ENCODE measurements at regions of chr2 and their contacts with region 1.

Region 1: DNA sequence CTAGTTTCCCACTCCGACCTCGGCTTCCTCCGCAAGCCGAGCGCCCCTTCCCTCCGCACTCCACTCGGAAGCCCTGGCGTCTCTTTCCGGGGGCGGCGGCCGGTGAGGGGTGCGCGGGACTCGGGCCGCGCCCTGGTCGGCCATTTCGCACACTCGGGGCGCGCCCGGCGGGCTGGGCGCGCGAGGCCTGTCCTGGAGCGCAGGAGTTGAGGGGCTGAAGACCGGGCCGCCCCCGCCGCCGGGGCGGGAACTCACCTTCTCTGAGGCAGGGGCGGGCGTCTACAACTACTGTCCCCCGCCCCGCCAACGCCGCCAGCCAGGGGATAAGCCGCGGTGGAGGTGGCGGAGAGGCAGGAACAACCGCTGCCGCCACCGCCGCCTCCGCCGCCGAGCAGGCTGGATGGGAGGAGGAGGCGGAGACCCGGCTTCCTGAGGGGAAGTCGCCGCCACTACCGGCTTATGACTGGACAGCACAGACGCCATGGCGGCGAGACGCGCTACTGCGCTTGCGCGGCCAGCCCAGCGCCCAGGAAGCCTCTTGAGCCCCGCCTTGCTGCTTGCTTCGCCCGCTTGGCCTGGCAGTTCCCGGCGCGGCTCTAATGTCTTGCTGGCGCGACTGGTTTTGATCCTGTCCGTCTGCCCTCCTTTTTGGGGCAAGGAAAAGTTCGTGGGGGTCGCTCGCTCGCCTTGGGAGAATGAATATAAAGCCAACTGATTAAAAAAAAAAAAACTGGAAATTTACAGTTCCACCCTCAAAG is at the start of gene KRCC1:
- DNase-seq: peak; percentile 94 to 99
- H3K4me3 ChIP-seq: peak within 1 kb of the TSS; percentile 96
- CTCF ChIP-seq: no peak
- POLR2A ChIP-seq: peak in 1 of 2 donors; percentile 36
- total RNA-seq, gene KRCC1: 11.5 to 27.9 (median 16.3) TPM

Region 2: DNA sequence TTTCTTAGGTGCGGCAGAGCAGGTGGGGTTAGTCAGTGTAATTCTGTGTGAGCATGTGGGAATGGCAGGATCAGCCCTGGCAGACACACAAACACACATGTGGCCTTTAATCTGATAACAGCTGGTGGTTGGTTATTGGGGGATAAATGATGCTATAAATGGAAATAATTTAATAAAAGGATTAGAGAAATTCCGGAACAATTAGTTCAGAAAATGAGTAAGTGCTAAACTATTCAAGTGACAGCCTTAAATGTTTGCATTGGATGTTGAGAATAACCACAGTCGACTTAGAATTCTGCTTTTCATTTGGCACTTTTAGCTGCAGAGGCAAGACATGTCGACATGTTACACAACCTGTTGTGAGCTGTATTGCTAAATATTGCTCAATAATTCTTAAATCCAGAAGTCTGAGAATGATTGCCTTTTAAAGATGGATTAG is 19.3 kb after region 1 on chr2:
- intact Hi-C with region 1: no loop called
- DNase-seq: no peak
- H3K4me3 ChIP-seq: no peak overlapping the region
- CTCF ChIP-seq: no peak
- POLR2A ChIP-seq: no peak

Region 3: DNA sequence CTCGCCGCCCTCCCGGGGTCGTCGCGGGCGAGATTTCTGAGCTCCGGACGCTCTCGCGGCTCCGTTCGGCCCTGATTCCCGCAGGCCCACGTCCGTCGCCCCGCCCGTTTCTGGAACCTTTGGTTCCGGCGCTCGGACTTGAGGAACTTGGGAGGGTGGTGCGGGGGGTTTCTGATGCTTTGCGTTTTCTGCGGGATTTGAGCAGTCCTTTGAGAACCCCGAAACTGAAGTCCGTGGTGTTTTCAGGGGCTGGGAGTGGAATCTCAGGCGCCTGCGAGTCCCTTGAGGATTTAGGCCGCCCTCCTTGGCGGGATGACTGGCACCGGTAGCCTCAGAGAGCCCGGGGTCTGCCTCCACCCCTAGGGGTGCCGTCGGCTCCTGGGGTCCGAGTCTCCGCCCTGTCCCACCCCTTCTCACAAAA is 114.9 kb after region 1 on chr2:
- intact Hi-C with region 1: loop called (anchors 10 kb)
- DNase-seq: peak in 1 of 2 donors; percentile 88
- H3K4me3 ChIP-seq: peak overlapping the region; percentile 40
- CTCF ChIP-seq: no peak
- POLR2A ChIP-seq: no peak